Endothelial cell of umbilical vein (primary cell): ENCODE measurements at regions of chr2 and their contacts with region 1.

Region 1: GRCh38 chr2:230007931-230008707 is 60.6 kb downstream of the SLC16A14 start:
- DNase-seq: peak; percentile 78
- H3K4me3 ChIP-seq: peak overlapping the region in 1 of 3 experiments; percentile 20
- H3K27ac ChIP-seq: no peak overlapping the region
- H3K4me1 ChIP-seq: peaks cover 7% of the 10 kb centered on the region
- H3K27me3 ChIP-seq: no peaks in the 10 kb centered on the region
- CTCF ChIP-seq: peak; percentile 67 to 78
- POLR2A ChIP-seq: no peak

Region 2: DNA sequence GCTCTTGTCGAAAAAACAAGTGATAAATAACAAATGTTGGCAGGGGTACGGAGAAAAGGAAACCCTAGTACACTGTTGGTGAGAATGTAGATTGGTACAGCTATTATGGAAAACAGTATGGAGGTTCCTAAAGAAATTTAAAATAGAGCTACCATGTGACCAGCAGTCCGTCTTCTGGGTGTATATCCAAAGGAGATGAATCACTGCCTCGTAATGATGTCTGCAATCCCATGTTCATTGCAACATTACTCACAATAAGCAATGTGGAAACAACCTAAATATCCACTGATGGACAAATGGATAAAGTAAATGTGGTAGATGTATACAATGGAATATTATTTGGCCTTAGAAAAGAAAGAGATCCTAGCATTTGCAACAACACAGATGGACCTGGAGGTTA is 10.0 kb after region 1 on chr2:
- CTCF ChIA-PET with region 1: interaction called, 10 read pairs
- POLR2A ChIA-PET with region 1: no interaction called
- dilution Hi-C with region 1: no loop called
- intact Hi-C with region 1: no loop called
- DNase-seq: no peak
- H3K4me3 ChIP-seq: no peak overlapping the region
- H3K27ac ChIP-seq: no peak overlapping the region
- H3K4me1 ChIP-seq: no peaks in the 10 kb centered on the region
- H3K27me3 ChIP-seq: peaks cover 3% of the 10 kb centered on the region in 2 experiments
- CTCF ChIP-seq: no peak
- POLR2A ChIP-seq: no peak